ENCODE measurements at regions of chr10 and their contacts with region 1.

Region 1: DNA sequence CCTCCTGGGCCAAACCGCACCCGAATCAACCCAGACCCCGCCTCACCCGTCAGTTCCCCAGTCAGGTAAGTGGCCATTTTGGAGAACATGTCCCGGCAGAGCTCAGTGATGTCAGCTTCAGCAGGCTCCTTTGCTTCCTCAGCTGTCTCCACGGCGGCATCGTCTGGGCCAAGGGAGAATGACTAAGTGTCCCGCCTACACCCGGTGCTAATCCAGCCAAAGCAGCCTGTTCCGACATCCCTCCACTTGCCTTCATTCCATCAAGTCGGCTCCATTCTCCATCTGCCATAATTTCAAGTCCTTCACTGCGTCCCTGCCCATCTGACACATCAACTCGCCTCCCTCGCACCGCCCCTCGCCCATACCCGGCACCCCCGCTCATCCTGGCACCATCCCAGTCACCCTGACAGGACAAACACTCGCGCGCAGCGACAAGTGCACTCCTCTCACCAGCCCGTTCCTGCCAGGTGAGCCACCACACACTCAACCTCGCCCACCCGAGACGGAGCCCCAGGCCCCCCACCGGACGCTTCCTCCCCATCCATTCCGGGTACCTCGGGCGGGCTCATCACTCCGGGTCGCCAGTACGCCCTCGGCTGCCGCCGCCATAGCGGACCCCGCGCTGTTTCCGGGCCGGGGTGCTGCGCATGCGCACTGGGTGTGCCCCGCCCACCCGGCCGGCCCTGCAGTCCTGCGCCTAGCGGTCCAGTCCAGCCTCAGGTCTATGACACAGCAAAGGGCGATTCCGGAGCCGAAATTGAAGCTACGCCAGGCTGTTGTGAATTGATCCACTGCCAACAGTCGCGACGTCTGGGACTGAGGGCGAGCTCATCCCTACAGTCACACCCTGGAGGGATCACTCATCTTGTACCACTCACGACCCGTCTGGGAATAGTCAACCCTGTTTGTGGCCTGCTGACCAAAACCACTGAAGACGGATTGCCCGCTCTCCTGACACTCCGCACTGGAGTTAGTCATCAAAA is at the start of gene BLOC1S2:
- DNase-seq: peak; percentile 66 to 95 (median 84)
- ATAC-seq: peak; percentile 78
- H3K4me3 ChIP-seq: peak within 1 kb of the TSS; percentile 79 to 91
- H3K4me3 Mint-ChIP-seq: peak within 1 kb of the TSS; percentile 100
- H3K27ac ChIP-seq: peak within 1 kb of the TSS; percentile 86 to 87
- H3K27ac Mint-ChIP-seq: peak within 1 kb of the TSS; percentile 100
- H3K4me1 ChIP-seq: peaks cover 24% of the 10 kb centered on the region
- H3K4me1 Mint-ChIP-seq: peaks cover 29% of the 10 kb centered on the region
- H3K27me3 ChIP-seq: no peaks in the 10 kb centered on the region
- H3K27me3 Mint-ChIP-seq: no peaks in the 10 kb centered on the region
- CTCF ChIP-seq: no peak
- total RNA-seq, gene BLOC1S2: 58.4 to 59.7 TPM

Region 2: GRCh38 chr10:99172130-99172738 is 1114.1 kb before region 1 on chr10:
- CTCF ChIA-PET with region 1: no interaction called
- POLR2A ChIA-PET with region 1: no interaction called
- intact Hi-C with region 1: no loop called
- DNase-seq: peak in 1 of 9 experiments; percentile 5
- ATAC-seq: no peak
- H3K4me3 ChIP-seq: no peak overlapping the region
- H3K4me3 Mint-ChIP-seq: no peak overlapping the region
- H3K27ac ChIP-seq: no peak overlapping the region
- H3K27ac Mint-ChIP-seq: no peak overlapping the region
- H3K4me1 ChIP-seq: no peaks in the 10 kb centered on the region
- H3K4me1 Mint-ChIP-seq: no peaks in the 10 kb centered on the region
- H3K27me3 ChIP-seq: no peaks in the 10 kb centered on the region
- H3K27me3 Mint-ChIP-seq: peaks cover 17% of the 10 kb centered on the region
- CTCF ChIP-seq: no peak

Region 3: DNA sequence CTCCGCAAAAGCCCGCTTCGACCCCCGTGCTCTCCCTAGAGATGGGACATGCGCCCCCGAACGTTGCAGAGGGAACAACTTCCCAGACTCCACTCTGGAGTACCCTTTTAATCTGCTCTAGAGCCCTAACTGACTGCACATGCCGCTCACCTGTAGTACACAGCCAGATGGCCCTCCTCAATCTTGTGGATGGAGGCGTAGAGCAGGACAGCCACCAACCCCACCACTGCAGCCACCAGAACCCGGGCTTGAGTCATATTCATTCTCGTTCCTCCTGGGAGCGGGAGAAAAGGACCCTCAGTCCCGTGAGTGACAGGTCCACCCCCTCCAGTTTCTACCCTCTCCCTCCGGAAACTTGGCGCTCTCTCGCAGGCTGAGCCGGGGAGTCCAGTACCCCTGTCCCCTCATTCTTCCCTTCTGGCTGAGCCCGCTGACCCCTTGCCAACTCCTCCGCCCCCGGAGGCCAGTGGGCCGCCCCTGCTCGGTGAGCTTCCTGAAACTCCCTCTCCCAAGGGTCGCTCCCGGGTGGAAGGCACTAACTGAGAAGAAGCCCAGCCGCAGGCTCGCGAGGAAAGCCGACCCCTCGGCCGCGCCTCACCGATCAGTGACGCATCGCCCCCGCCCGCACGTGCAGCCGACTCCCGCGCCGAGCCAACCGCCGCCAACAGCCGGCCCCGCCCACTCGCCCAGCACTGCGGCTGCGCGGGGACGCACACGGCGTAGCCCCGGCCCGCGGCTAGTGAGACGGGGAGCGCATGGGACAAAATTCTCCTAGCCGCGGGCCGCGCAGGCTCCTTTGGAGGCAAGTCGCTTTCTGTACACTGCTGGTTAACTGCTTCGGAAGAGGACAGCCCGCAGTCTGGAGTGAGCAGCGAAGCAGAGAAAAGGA is 100.7 kb before region 1 on chr10 and contains the start of gene ERLIN1:
- CTCF ChIA-PET with region 1: no interaction called
- POLR2A ChIA-PET with region 1: no interaction called
- intact Hi-C with region 1: loop called in 1 of 2 experiments (anchors 1 kb)
- DNase-seq: peak; percentile 78 to 95 (median 91)
- ATAC-seq: peak; percentile 93
- H3K4me3 ChIP-seq: peak within 1 kb of the TSS; percentile 68 to 96
- H3K4me3 Mint-ChIP-seq: peak within 1 kb of the TSS; percentile 98
- H3K27ac ChIP-seq: peak within 1 kb of the TSS; percentile 85 to 89
- H3K27ac Mint-ChIP-seq: peak within 1 kb of the TSS; percentile 95
- H3K4me1 ChIP-seq: peaks cover 24% of the 10 kb centered on the region
- H3K4me1 Mint-ChIP-seq: peaks cover 64% of the 10 kb centered on the region
- H3K27me3 ChIP-seq: no peaks in the 10 kb centered on the region
- H3K27me3 Mint-ChIP-seq: no peaks in the 10 kb centered on the region
- CTCF ChIP-seq: no peak
- total RNA-seq, gene ERLIN1: 2.0 to 3.1 TPM

Region 4: DNA sequence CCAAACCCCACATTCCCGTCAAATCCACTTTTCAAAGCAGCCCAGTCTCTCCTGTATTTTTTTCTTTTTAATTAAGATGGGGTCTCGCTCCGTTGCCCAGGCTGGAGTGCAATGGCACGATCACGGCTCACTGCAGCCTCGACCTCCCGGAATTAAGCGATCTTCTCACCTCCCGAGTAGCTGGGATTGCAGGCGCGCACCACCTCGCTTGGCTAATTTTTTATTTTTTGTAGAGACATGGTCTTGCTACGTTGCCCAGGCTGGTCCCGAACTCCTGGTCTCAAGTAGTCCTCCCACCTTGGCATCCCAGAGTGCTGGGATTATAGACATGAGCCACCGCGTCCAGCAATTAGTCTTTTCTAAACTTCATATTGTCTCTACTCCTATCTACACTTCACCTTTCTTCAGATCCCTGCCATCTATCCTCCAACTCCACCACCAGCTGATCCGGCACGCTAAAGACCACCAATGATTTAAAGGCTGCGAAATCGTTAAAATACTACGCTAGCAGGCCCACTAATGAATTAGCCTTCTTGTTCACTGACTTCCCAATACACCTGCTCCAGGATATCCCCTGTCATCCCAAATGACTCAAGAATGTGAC is 56.4 kb before region 1 on chr10:
- CTCF ChIA-PET with region 1: no interaction called
- POLR2A ChIA-PET with region 1: no interaction called
- intact Hi-C with region 1: loop called in 1 of 2 experiments (anchors 1 kb)
- DNase-seq: peak in 1 of 9 experiments; percentile 9
- ATAC-seq: no peak
- H3K4me3 ChIP-seq: peak overlapping the region; percentile 66 to 99
- H3K4me3 Mint-ChIP-seq: peak overlapping the region; percentile 93
- H3K27ac ChIP-seq: peak overlapping the region; percentile 83 to 89
- H3K27ac Mint-ChIP-seq: peak overlapping the region; percentile 95
- H3K4me1 ChIP-seq: peaks cover 21% of the 10 kb centered on the region
- H3K4me1 Mint-ChIP-seq: peaks cover 32% of the 10 kb centered on the region
- H3K27me3 ChIP-seq: no peaks in the 10 kb centered on the region
- H3K27me3 Mint-ChIP-seq: no peaks in the 10 kb centered on the region
- CTCF ChIP-seq: no peak

Region 5: DNA sequence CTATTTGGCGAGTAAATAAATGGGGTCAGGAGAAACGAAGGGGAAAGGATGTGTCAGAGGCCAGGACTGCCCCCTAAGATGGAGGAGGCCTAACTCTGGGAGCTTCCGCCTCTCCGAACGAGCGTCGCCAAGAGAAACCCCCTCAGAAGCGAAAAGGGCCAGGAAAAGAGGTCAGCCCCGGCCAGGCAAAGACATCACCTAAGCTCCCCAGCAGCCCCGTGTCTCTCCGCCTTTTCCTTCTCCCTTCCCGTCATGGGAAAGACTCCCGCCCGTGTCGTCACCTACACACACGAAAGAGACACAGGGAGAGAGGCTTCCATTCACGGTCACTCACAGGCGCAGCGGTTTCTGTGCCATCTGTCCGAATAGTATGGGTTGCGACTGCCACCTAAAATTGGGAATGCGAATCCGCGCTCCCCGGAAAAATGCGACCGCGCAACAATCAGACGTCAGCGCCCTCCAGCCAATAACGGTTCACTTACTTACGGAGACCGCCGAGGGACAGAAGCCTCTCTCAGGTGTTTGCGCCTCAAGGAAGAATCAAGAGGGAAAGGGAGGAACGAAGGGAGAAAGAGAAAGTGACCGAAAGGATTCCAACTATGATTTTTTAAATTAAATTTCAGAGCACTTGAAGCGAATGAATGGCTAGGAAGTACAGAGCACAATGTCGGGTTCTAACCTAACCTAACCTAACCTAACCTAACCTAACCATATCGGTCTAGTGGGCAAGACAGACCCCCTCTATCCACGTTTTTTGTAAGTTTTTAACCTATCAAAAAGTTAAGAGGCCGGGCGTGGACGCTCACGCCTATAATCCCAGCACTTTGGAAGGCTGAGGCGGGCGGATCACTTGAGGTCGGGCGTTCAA is 18.9 kb before region 1 on chr10 and contains the start of gene CWF19L1:
- CTCF ChIA-PET with region 1: interaction called, 3 read pairs
- POLR2A ChIA-PET with region 1: no interaction called
- intact Hi-C with region 1: loop called (anchors 1 to 2 kb)
- DNase-seq: peak; percentile 48 to 88 (median 76)
- ATAC-seq: peak; percentile 88
- H3K4me3 ChIP-seq: peak within 1 kb of the TSS; percentile 87 to 100
- H3K4me3 Mint-ChIP-seq: peak within 1 kb of the TSS; percentile 100
- H3K27ac ChIP-seq: peak within 1 kb of the TSS; percentile 81 to 95
- H3K27ac Mint-ChIP-seq: peak within 1 kb of the TSS; percentile 100
- H3K4me1 ChIP-seq: peaks cover 22% of the 10 kb centered on the region
- H3K4me1 Mint-ChIP-seq: peaks cover 33% of the 10 kb centered on the region
- H3K27me3 ChIP-seq: no peaks in the 10 kb centered on the region
- H3K27me3 Mint-ChIP-seq: no peaks in the 10 kb centered on the region
- CTCF ChIP-seq: no peak
- total RNA-seq, gene CWF19L1: 70.9 to 83.7 TPM

Region 6: GRCh38 chr10:100346765-100347567 is 60.6 kb after region 1 on chr10 and contains the start of gene SCD:
- CTCF ChIA-PET with region 1: no interaction called
- POLR2A ChIA-PET with region 1: no interaction called
- intact Hi-C with region 1: loop called in 1 of 2 experiments (anchors 1 kb)
- DNase-seq: peak; percentile 46 to 91 (median 72)
- ATAC-seq: peak; percentile 86
- H3K4me3 ChIP-seq: peak within 1 kb of the TSS; percentile 63 to 79
- H3K4me3 Mint-ChIP-seq: peak within 1 kb of the TSS; percentile 93
- H3K27ac ChIP-seq: peak within 1 kb of the TSS in 1 of 2 experiments; percentile 36
- H3K27ac Mint-ChIP-seq: peak within 1 kb of the TSS; percentile 60
- H3K4me1 ChIP-seq: peaks cover 6% of the 10 kb centered on the region
- H3K4me1 Mint-ChIP-seq: peaks cover 31% of the 10 kb centered on the region
- H3K27me3 ChIP-seq: no peaks in the 10 kb centered on the region
- H3K27me3 Mint-ChIP-seq: no peaks in the 10 kb centered on the region
- CTCF ChIP-seq: no peak
- total RNA-seq, gene SCD: 5.4 TPM

Region 7: GRCh38 chr10:100403734-100404133 is 117.4 kb after region 1 on chr10:
- CTCF ChIA-PET with region 1: no interaction called
- POLR2A ChIA-PET with region 1: no interaction called
- intact Hi-C with region 1: no loop called
- DNase-seq: no peak
- ATAC-seq: no peak
- H3K4me3 ChIP-seq: no peak overlapping the region
- H3K4me3 Mint-ChIP-seq: no peak overlapping the region
- H3K27ac ChIP-seq: no peak overlapping the region
- H3K27ac Mint-ChIP-seq: no peak overlapping the region
- H3K4me1 ChIP-seq: no peaks in the 10 kb centered on the region
- H3K4me1 Mint-ChIP-seq: no peaks in the 10 kb centered on the region
- H3K27me3 ChIP-seq: no peaks in the 10 kb centered on the region
- H3K27me3 Mint-ChIP-seq: no peaks in the 10 kb centered on the region
- CTCF ChIP-seq: no peak

Region 8: GRCh38 chr10:100535715-100536353 is 249.5 kb after region 1 on chr10 and contains the start of gene HIF1AN:
- CTCF ChIA-PET with region 1: no interaction called
- POLR2A ChIA-PET with region 1: no interaction called
- intact Hi-C with region 1: loop called (anchors 2 to 5 kb)
- DNase-seq: peak; percentile 73 to 97 (median 88)
- ATAC-seq: peak; percentile 99
- H3K4me3 ChIP-seq: peak within 1 kb of the TSS; percentile 59 to 82
- H3K4me3 Mint-ChIP-seq: no peak within 1 kb of the TSS
- H3K27ac ChIP-seq: peak within 1 kb of the TSS; percentile 55 to 75
- H3K27ac Mint-ChIP-seq: no peak within 1 kb of the TSS
- H3K4me1 ChIP-seq: peaks cover 29% of the 10 kb centered on the region
- H3K4me1 Mint-ChIP-seq: peaks cover 19% of the 10 kb centered on the region
- H3K27me3 ChIP-seq: no peaks in the 10 kb centered on the region
- H3K27me3 Mint-ChIP-seq: no peaks in the 10 kb centered on the region
- CTCF ChIP-seq: peak; percentile 92
- total RNA-seq, gene HIF1AN: 28.0 to 31.2 TPM